ENCODE measurements at regions of chr2 and their contacts with region 1.

Region 1: GRCh38 chr2:43611987-43612894 is 16.4 kb upstream of the THADA start:
- DNase-seq: peak; percentile 91
- H3K4me3 Mint-ChIP-seq: no peak overlapping the region
- H3K27ac Mint-ChIP-seq: no peak overlapping the region
- H3K4me1 Mint-ChIP-seq: peaks cover 2% of the 10 kb centered on the region
- H3K27me3 Mint-ChIP-seq: peaks cover 4% of the 10 kb centered on the region

Region 2: DNA sequence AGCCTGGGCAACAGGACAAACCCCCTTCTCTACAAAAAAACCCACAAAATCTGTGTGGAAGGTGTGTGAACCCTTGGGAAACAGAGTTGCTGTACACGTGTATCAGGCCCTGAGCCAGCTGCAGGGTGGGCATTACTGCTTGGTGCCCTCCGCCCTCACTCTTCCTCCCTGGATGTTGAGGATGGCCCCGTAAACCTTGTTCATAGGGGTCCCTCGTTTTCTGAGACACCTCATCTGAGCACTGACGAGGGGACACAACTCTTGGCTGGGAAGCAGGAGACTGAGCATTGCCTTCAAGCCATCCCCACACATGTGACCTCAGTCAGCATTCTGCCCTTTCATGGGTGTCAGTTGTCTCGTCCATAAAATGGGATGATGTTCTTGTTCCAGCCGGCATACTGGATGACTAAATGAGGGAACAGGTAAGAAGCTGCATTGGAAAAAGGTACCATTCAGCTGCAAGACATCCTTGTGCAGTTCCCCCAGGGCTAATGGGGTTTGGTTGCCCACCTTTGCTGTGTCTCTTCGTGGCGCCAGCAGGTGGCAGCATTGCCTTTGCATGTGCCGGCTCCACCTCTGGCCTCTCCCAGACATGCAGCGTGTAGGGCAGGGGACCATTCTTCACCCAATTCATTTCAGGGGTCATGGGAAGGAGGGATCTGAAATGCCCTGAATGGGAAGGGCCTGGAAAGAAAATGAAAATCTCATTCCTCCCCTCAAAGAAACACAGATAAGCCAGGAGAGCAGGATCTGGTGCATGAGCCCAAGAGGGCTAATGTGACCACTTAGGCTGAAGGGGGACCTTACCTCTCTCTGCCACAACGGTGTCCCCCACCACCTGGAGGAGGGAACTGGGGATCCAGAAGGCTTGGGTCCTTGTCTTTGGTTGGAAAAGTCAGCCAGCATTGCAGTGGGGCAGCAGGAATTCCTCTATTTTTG is 783.5 kb before region 1 on chr2:
- intact Hi-C with region 1: loop called (anchors 1 kb)
- DNase-seq: peak; percentile 91
- H3K4me3 Mint-ChIP-seq: no peak overlapping the region
- H3K27ac Mint-ChIP-seq: no peak overlapping the region
- H3K4me1 Mint-ChIP-seq: peaks cover 7% of the 10 kb centered on the region
- H3K27me3 Mint-ChIP-seq: peaks cover 13% of the 10 kb centered on the region

Region 3: GRCh38 chr2:43877782-43878464 is 265.7 kb after region 1 on chr2:
- intact Hi-C with region 1: loop called (anchors 10 kb)
- DNase-seq: peak; percentile 90
- H3K4me3 Mint-ChIP-seq: no peak overlapping the region
- H3K27ac Mint-ChIP-seq: no peak overlapping the region
- H3K4me1 Mint-ChIP-seq: peaks cover 2% of the 10 kb centered on the region
- H3K27me3 Mint-ChIP-seq: no peaks in the 10 kb centered on the region